Activated CD4-positive, alpha-beta T cell treated with anti-CD3 and anti-CD28 coated beads, Interleukin-2, amount 10 ng/mL, durations not matched to agents 24 days and 14 days (primary cell): ENCODE measurements at regions of chr10 and their contacts with region 1.

Region 1: GRCh38 chr10:32346134-32346550 is 816 bp downstream of the EPC1 start:
- DNase-seq: peak; percentile 98
- H3K4me3 Mint-ChIP-seq: peak overlapping the region; percentile 90
- H3K27ac Mint-ChIP-seq: peak overlapping the region; percentile 99
- H3K4me1 Mint-ChIP-seq: peaks cover 42% of the 10 kb centered on the region
- H3K27me3 Mint-ChIP-seq: peaks cover 4% of the 10 kb centered on the region

Region 2: GRCh38 chr10:32055813-32056600 is 290.1 kb before region 1 on chr10 and contains the start of gene KIF5B:
- intact Hi-C with region 1: loop called (anchors 5 kb)
- DNase-seq: peak; percentile 97
- H3K4me3 Mint-ChIP-seq: peak within 1 kb of the TSS; percentile 92
- H3K27ac Mint-ChIP-seq: peak within 1 kb of the TSS; percentile 96
- H3K4me1 Mint-ChIP-seq: peaks cover 36% of the 10 kb centered on the region
- H3K27me3 Mint-ChIP-seq: no peaks in the 10 kb centered on the region
- total RNA-seq, gene KIF5B: 81.3 and 82.2 TPM in 2 replicates

Region 3: DNA sequence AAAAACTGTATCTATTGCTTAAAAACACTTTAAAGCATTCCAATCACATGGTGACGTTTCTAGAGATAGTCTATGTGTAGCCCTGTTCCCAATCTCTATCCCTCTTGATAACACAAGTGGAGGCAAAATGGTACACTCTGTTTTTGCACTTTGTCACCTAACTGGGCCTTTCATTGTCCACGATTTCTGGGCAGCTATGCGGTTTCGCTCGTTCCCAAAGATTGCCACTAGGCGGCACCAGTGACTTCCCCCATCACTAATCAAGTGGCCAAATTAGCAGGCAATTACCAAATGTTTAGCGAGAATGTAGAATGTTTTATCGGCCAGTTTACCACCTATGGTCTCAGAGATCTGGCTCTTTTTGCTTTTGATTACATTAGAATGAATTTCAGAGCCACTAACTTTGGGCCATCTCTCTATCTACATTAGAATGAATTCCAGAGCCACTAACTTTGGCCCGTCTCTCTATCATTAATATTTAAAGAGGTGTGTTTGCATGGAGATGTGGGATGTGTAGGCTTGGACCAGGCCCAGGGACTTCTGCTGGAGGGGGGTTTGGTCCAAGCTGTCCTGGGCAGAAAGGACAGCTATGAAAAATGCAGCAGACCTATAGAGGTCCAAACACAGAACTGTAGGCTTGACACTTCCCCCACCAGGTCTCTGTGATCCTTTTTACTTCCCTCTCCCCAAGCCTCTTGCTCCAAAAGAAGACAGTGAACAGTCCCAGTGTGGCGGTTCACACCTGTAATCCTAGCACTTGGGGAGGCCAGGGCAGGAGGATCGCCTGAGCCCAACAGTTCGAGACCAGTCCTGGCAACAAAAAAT is 89.3 kb before region 1 on chr10:
- intact Hi-C with region 1: loop called (anchors 1 kb)
- DNase-seq: peak; percentile 90
- H3K4me3 Mint-ChIP-seq: no peak overlapping the region
- H3K27ac Mint-ChIP-seq: no peak overlapping the region
- H3K4me1 Mint-ChIP-seq: peaks cover 18% of the 10 kb centered on the region
- H3K27me3 Mint-ChIP-seq: no peaks in the 10 kb centered on the region

Region 4: DNA sequence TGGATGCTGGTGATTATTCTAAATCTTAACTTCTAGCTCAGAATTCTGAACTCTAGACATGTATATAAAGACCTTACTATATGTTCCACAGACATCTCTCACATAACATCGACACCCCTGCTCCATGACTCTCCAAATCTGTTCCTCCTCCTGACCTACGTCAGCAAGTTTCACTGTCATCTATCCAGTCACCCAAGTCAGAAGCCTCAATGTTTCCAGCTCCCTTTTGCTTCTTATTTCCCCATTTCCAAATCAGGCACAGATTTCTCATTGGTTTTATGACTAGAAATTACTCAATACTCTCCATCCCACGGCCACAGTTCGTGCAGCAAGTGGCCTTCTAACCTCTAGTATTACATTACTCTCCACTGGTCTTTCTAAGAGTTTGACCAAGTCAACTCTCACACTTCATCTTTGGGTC is 27.7 kb before region 1 on chr10:
- intact Hi-C with region 1: loop called (anchors 1 kb)
- DNase-seq: peak; percentile 62
- H3K4me3 Mint-ChIP-seq: peak overlapping the region; percentile 32
- H3K27ac Mint-ChIP-seq: peak overlapping the region; percentile 69
- H3K4me1 Mint-ChIP-seq: peaks cover 40% of the 10 kb centered on the region
- H3K27me3 Mint-ChIP-seq: no peaks in the 10 kb centered on the region

Region 5: DNA sequence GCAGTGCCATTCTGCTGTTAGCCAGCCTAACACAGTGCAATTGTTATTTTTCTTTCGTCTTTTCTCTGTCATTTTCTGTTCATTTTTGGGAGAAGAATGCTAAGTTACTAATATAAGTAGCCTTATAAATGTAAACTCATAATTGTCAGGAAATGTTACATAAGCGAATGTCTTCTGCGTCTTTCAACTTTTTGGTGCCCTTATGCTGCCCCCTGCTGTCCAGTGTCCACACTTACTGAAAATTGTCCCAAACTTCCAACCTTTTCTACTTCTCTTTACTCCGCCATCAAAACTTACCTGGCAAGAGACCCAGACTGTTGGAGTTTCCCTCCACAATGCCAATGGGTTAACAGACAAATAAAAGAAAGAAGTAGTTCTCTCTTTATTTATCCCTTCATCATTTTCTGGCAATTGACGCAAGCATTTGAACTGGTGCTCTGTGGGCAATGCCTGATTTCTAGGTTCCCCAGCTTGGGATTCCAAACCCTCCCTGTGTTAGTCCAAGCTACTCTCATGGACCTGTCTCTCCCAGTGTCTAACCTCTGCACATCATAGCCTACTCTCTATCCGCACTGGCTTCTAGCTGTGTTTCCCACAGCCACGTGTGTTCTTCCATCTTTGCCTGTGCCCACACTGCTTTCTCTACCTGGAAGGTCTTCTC is 21.8 kb after region 1 on chr10:
- intact Hi-C with region 1: loop called (anchors 1 kb)
- DNase-seq: peak; percentile 91
- H3K4me3 Mint-ChIP-seq: peak overlapping the region; percentile 41
- H3K27ac Mint-ChIP-seq: no peak overlapping the region
- H3K4me1 Mint-ChIP-seq: peaks cover 32% of the 10 kb centered on the region
- H3K27me3 Mint-ChIP-seq: no peaks in the 10 kb centered on the region